ENCODE measurements at regions of chr17 and their contacts with region 1.

Region 1: DNA sequence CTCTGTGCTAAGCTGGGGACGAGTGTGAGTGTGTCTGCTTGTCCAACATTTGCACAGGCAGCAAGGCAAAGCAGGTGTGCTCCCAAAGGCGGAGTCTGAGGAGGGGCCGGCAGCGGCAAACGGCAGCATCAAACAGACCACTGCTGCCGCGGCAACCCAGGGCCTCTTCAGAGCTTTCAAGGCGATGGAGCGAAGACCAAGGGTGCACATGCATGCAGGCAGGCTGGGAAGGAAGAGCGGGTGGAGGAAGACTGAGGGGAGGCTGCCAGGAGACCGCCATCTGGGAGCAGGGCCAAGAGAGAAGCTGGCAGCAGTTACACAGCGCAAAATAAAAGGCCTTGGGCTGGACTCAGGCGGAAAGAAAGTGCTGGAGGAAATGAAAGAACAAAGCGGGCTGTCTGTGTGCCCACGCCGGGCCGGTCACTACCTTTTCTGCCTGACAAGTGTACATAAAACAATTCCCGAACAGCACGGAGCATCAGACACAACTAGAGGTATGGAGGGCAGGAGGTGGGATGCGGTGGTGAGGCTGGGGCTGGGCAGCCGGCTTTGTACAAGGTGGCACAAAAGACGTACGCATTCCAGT is 8.5 kb downstream of the TIMM22 start:
- DNase-seq: peak; percentile 76 to 91 (median 89)
- ATAC-seq: peak; percentile 35 to 56
- H3K4me3 ChIP-seq: no peak overlapping the region
- H3K27ac ChIP-seq: peak overlapping the region; percentile 39
- H3K4me1 ChIP-seq: peaks cover 30% of the 10 kb centered on the region
- H3K27me3 ChIP-seq: no peaks in the 10 kb centered on the region

Region 2: GRCh38 chr17:1055751-1056645 is 50.5 kb after region 1 on chr17:
- intact Hi-C with region 1: loop called in 3 of 4 experiments (anchors 5 to 10 kb)
- DNase-seq: peak; percentile 66 to 86 (median 83)
- ATAC-seq: peak; percentile 77 to 80
- H3K4me3 ChIP-seq: no peak overlapping the region
- H3K27ac ChIP-seq: no peak overlapping the region
- H3K4me1 ChIP-seq: no peaks in the 10 kb centered on the region
- H3K27me3 ChIP-seq: no peaks in the 10 kb centered on the region

Region 3: GRCh38 chr17:1067282-1067956 is 62.0 kb after region 1 on chr17:
- intact Hi-C with region 1: no loop called
- DNase-seq: peak in 2 of 3 donors; percentile 53 to 64
- ATAC-seq: peak; percentile 72 to 80
- H3K4me3 ChIP-seq: no peak overlapping the region
- H3K27ac ChIP-seq: no peak overlapping the region
- H3K4me1 ChIP-seq: no peaks in the 10 kb centered on the region
- H3K27me3 ChIP-seq: no peaks in the 10 kb centered on the region